Heart right ventricle (tissue), 16 donors: ENCODE measurements at regions of chr9 and their contacts with region 1.

Region 1: DNA sequence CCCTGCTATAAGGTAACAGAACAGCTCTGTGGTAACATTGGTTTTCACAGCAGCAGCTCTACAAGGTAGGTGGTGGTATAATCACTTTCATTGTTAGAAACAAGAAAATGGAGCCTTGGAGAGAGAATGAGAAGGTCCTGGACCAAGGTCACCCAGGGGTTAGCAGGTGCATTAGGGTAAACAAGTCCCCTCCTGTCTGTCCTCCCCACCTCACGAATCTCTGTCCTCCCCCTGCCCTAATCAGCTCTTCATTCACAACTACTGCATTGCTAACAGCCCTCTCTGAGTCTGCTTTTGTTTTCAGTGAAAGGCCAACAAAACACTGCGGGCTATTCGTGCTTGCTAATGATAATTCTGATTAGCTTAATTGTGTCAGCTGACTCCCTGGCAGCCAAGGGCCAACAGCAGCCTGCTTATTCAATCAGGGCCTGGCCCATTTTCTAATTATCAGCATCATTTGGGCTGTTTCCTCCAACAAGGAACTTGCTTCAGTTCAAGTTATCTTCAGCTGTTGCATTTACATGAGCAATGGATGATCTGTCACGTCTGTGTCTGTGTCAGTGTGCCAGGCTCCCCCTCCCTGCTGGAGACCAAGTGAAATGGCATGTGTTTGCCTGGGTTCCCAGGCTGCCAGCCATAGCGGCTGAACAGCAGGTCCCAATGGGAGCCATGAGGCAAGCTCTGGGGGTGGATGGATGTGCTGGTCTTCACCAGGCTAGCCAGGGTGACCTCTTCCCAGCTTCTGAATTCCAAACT is 56.7 kb upstream of the EQTN start:
- DNase-seq: no peak
- ATAC-seq: peak in 1 of 8 donors; percentile 48
- H3K4me3 ChIP-seq: no peak overlapping the region
- H3K27ac ChIP-seq: peak overlapping the region in 2 of 10 donors; percentile 56 to 72
- H3K4me1 ChIP-seq: peaks cover 0 to 49% (median 17%) of the 10 kb centered on the region in 9 donors
- H3K27me3 ChIP-seq: no peaks in the 10 kb centered on the region
- CTCF ChIP-seq: no peak

Region 2: GRCh38 chr9:27292659-27293405 is 60.8 kb before region 1 on chr9:
- intact Hi-C with region 1: loop called in 1 of 10 experiments (anchors 10 kb)
- DNase-seq: no peak
- ATAC-seq: no peak
- H3K4me3 ChIP-seq: no peak overlapping the region
- H3K27ac ChIP-seq: no peak overlapping the region
- H3K4me1 ChIP-seq: no peaks in the 10 kb centered on the region
- H3K27me3 ChIP-seq: peaks cover 0 to 8% (median 0%) of the 10 kb centered on the region in 7 donors
- CTCF ChIP-seq: no peak

Region 3: GRCh38 chr9:27407986-27408385 is 54.3 kb after region 1 on chr9:
- intact Hi-C with region 1: loop called in 2 of 10 experiments (anchors 10 kb)
- DNase-seq: no peak
- ATAC-seq: peak in 1 of 8 donors; percentile 15
- H3K4me3 ChIP-seq: no peak overlapping the region
- H3K27ac ChIP-seq: no peak overlapping the region
- H3K4me1 ChIP-seq: peaks cover 0 to 24% (median 17%) of the 10 kb centered on the region in 9 donors
- H3K27me3 ChIP-seq: no peaks in the 10 kb centered on the region
- CTCF ChIP-seq: no peak

Region 4: GRCh38 chr9:27600256-27600655 is 246.6 kb after region 1 on chr9:
- intact Hi-C with region 1: no loop called
- DNase-seq: no peak
- ATAC-seq: peak in 7 of 8 donors; percentile 55 to 81 (median 70)
- H3K4me3 ChIP-seq: no peak overlapping the region
- H3K27ac ChIP-seq: peak overlapping the region in 7 of 10 donors; percentile 10 to 90 (median 42)
- H3K4me1 ChIP-seq: peaks cover 0 to 32% (median 0%) of the 10 kb centered on the region in 9 donors
- H3K27me3 ChIP-seq: no peaks in the 10 kb centered on the region
- CTCF ChIP-seq: no peak